HepG2 (cell line): ENCODE measurements at regions of chr11 and their contacts with region 1.

Region 1: DNA sequence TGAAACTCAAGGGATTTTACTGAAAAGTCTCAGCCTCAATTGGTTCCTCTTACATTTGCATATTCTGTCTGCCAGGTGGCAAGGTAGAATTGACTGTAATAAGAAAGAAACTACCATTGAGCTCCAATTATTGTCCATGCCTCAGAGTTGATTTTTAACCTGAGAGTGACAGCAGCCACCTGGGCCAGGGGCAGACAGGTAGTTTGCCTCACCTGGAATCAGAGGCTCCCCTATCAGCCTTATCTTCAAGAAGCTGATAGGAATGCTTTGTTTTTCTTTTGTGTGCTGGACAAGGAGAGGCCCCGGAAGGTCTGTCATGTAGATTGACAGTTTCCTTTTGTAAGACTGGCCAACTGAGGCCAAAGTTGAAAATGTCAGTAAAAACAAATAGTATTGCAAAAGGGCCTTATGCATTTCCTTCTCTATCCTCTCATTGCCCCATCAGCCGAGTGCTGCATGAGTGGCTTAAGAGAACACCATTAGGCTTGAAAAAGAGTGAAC is 34.1 kb downstream of the CD44 start:
- DNase-seq: peak; percentile 38
- ATAC-seq: peak; percentile 85
- H3K4me3 ChIP-seq: no peak overlapping the region
- H3K27ac ChIP-seq: no peak overlapping the region
- H3K4me1 ChIP-seq: peaks cover 20% of the 10 kb centered on the region
- H3K27me3 ChIP-seq: no peaks in the 10 kb centered on the region; a peak in 1 of 5 replicates
- CTCF ChIP-seq: no peak
- EP300 ChIP-seq: peak in 1 of 2 experiments; percentile 63; a peak in 1 of 4 replicates
- POLR2A ChIP-seq: no peak
- RAD21 ChIP-seq: no peak

Region 2: DNA sequence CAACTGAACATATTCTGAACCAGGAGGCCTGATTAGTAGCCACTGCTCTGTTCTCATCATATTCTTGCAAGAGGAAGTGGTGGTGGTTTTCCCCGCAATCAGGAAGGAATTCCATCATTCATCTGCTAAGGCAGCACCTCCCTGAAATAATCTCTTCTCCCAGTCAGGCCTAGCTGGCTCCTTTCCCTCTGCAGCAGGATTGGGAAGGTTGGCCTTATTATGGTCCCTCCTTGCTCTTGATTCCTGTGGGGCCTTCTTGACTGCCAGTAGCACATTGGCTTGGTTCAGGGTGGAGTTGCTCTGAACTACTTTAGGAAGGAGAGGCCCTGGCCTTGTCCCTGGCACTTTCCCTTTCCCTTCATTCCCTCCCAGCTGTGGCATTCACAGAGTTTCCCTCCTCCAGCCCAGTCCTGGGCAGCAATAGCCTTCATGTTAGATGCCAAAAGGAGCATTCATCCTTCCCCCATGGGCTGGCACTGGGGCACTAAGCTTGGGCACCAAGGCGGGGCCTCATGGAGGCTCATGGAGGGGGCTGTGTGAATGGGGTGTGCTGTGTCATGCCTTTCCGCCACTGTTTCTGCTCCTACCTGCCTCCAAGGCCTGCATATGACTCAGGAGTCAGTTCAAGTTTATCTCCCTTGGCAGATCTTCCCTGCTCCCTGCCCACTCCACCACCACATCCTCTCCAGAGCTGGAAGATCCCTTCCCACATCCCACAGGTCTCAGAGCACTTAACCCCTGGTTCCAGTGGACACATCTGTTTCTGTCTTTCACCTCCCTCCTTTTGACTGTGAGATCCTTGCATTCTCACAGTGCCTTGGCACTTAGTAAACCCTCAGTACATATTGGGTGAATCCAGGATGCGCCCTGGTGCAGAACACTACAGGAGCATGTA is 61.7 kb before region 1 on chr11:
- CTCF ChIA-PET with region 1: no interaction called
- POLR2A ChIA-PET with region 1: no interaction called
- in situ Hi-C with region 1: loop called (anchors 10 kb)
- intact Hi-C with region 1: no loop called
- DNase-seq: no peak
- ATAC-seq: no peak
- H3K4me3 ChIP-seq: no peak overlapping the region
- H3K27ac ChIP-seq: no peak overlapping the region
- H3K4me1 ChIP-seq: no peaks in the 10 kb centered on the region
- H3K27me3 ChIP-seq: peaks cover 0 to 4% of the 10 kb centered on the region in 2 experiments; a peak in 3 of 5 replicates
- CTCF ChIP-seq: no peak
- EP300 ChIP-seq: no peak
- POLR2A ChIP-seq: no peak
- RAD21 ChIP-seq: no peak